ENCODE measurements at regions of chr19 and their contacts with region 1.

Region 1: GRCh38 chr19:1605236-1606137 is at the start of gene UQCR11:
- DNase-seq: peak; percentile 95
- ATAC-seq: peak; percentile 91
- H3K4me3 ChIP-seq: peak within 1 kb of the TSS; percentile 86 to 99 (median 98)
- H3K4me3 Mint-ChIP-seq: peak within 1 kb of the TSS; percentile 96
- H3K27ac ChIP-seq: peak within 1 kb of the TSS; percentile 61 to 86
- H3K27ac Mint-ChIP-seq: peak within 1 kb of the TSS; percentile 97
- H3K4me1 ChIP-seq: peaks cover 31 to 45% of the 10 kb centered on the region in 2 donors
- H3K4me1 Mint-ChIP-seq: peaks cover 45% of the 10 kb centered on the region
- H3K27me3 ChIP-seq: no peaks in the 10 kb centered on the region
- H3K27me3 Mint-ChIP-seq: no peaks in the 10 kb centered on the region
- CTCF ChIP-seq: peak; percentile 50
- total RNA-seq, gene UQCR11: 66.8 and 73.7 TPM in 2 replicates

Region 2: GRCh38 chr19:1568320-1569019 is 37.0 kb before region 1 on chr19 and contains the start of gene MEX3D:
- CTCF ChIA-PET with region 1: no interaction called
- POLR2A ChIA-PET with region 1: no interaction called
- intact Hi-C with region 1: loop called (anchors 1 kb)
- DNase-seq: peak; percentile 90
- ATAC-seq: peak; percentile 94
- H3K4me3 ChIP-seq: peak within 1 kb of the TSS in 3 of 5 experiments; percentile 29 to 56 (median 38)
- H3K4me3 Mint-ChIP-seq: peak within 1 kb of the TSS; percentile 66
- H3K27ac ChIP-seq: no peak within 1 kb of the TSS
- H3K27ac Mint-ChIP-seq: peak within 1 kb of the TSS; percentile 41
- H3K4me1 ChIP-seq: peaks cover 11 to 13% of the 10 kb centered on the region in 2 donors
- H3K4me1 Mint-ChIP-seq: peaks cover 2% of the 10 kb centered on the region
- H3K27me3 ChIP-seq: peaks cover 0 to 18% (median 0%) of the 10 kb centered on the region in 4 experiments
- H3K27me3 Mint-ChIP-seq: peaks cover 3% of the 10 kb centered on the region
- CTCF ChIP-seq: no peak
- total RNA-seq, gene MEX3D: 3.0 and 4.2 TPM in 2 replicates

Region 3: DNA sequence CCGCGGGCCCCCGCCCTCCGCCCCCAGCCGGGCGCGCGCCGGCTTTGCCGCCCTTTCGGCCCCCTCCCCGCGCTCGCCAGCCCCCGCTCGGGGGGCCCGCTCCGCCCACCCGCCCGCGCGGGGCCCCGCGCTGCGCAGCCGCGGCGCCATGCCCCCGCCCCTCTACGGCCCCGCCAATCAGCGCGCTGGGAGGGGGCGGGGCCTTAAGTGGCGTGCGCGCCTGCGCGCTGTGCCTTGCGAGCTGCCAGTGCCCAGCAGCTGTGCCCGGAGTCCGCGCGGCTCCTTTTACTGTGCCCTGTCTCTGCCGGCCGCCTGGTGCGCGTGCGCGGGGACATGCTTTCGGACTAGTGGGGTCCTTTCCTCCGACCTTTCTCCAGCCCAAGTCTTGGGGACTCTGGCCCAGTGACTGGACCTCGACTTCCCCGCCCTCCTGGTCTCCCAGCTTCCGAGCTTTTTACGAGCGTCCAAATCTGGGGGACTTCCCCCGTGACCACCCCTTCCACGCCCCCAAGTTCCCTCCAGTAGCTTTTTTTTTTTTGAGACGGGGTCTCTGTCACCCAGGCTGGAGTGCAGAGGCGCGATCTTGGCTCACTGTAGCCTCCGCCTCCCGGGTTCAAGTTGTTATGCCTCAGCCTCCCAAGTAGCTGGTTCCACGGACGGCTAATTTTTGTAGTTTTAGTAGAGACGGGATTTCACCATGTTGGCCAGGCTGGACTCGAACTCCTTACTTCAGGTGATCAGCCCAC is 12.6 kb before region 1 on chr19 and contains the start of gene MBD3:
- CTCF ChIA-PET with region 1: interaction called, 18 read pairs
- POLR2A ChIA-PET with region 1: interaction called, 18 read pairs
- intact Hi-C with region 1: loop called (anchors 1 kb)
- DNase-seq: peak; percentile 93
- ATAC-seq: peak; percentile 87
- H3K4me3 ChIP-seq: peak within 1 kb of the TSS; percentile 36 to 90 (median 80)
- H3K4me3 Mint-ChIP-seq: peak within 1 kb of the TSS; percentile 93
- H3K27ac ChIP-seq: peak within 1 kb of the TSS; percentile 84 to 89
- H3K27ac Mint-ChIP-seq: peak within 1 kb of the TSS; percentile 89
- H3K4me1 ChIP-seq: peaks cover 17 to 34% of the 10 kb centered on the region in 2 donors
- H3K4me1 Mint-ChIP-seq: peaks cover 29% of the 10 kb centered on the region
- H3K27me3 ChIP-seq: no peaks in the 10 kb centered on the region
- H3K27me3 Mint-ChIP-seq: no peaks in the 10 kb centered on the region
- CTCF ChIP-seq: no peak
- total RNA-seq, gene MBD3: 84.6 and 87.6 TPM in 2 replicates

Region 4: GRCh38 chr19:1618157-1619093 is 12.9 kb after region 1 on chr19:
- CTCF ChIA-PET with region 1: interaction called, 5 read pairs
- POLR2A ChIA-PET with region 1: no interaction called
- intact Hi-C with region 1: loop called (anchors 1 kb)
- DNase-seq: peak; percentile 49
- ATAC-seq: peak; percentile 65
- H3K4me3 ChIP-seq: no peak overlapping the region
- H3K4me3 Mint-ChIP-seq: peak overlapping the region; percentile 7
- H3K27ac ChIP-seq: peak overlapping the region in 1 of 2 donors; percentile 28
- H3K27ac Mint-ChIP-seq: peak overlapping the region; percentile 62
- H3K4me1 ChIP-seq: peaks cover 19 to 42% of the 10 kb centered on the region in 2 donors
- H3K4me1 Mint-ChIP-seq: peaks cover 33% of the 10 kb centered on the region
- H3K27me3 ChIP-seq: no peaks in the 10 kb centered on the region
- H3K27me3 Mint-ChIP-seq: no peaks in the 10 kb centered on the region
- CTCF ChIP-seq: peak; percentile 37

Region 5: GRCh38 chr19:1767464-1767933 is 162.0 kb after region 1 on chr19:
- CTCF ChIA-PET with region 1: interaction called, 8 read pairs
- POLR2A ChIA-PET with region 1: no interaction called
- intact Hi-C with region 1: loop called (anchors 5 kb)
- DNase-seq: peak; percentile 76
- ATAC-seq: peak; percentile 84
- H3K4me3 ChIP-seq: no peak overlapping the region
- H3K4me3 Mint-ChIP-seq: no peak overlapping the region
- H3K27ac ChIP-seq: no peak overlapping the region
- H3K27ac Mint-ChIP-seq: no peak overlapping the region
- H3K4me1 ChIP-seq: peaks cover 16 to 34% of the 10 kb centered on the region in 2 donors
- H3K4me1 Mint-ChIP-seq: peaks cover 4% of the 10 kb centered on the region
- H3K27me3 ChIP-seq: peaks cover 0 to 89% (median 69%) of the 10 kb centered on the region in 4 experiments
- H3K27me3 Mint-ChIP-seq: peaks cover 62% of the 10 kb centered on the region
- CTCF ChIP-seq: peak; percentile 93

Measured in B cell (primary cell).